Pancreas (tissue), 10 donors: ENCODE measurements at regions of chr3 and their contacts with region 1.

Region 1: DNA sequence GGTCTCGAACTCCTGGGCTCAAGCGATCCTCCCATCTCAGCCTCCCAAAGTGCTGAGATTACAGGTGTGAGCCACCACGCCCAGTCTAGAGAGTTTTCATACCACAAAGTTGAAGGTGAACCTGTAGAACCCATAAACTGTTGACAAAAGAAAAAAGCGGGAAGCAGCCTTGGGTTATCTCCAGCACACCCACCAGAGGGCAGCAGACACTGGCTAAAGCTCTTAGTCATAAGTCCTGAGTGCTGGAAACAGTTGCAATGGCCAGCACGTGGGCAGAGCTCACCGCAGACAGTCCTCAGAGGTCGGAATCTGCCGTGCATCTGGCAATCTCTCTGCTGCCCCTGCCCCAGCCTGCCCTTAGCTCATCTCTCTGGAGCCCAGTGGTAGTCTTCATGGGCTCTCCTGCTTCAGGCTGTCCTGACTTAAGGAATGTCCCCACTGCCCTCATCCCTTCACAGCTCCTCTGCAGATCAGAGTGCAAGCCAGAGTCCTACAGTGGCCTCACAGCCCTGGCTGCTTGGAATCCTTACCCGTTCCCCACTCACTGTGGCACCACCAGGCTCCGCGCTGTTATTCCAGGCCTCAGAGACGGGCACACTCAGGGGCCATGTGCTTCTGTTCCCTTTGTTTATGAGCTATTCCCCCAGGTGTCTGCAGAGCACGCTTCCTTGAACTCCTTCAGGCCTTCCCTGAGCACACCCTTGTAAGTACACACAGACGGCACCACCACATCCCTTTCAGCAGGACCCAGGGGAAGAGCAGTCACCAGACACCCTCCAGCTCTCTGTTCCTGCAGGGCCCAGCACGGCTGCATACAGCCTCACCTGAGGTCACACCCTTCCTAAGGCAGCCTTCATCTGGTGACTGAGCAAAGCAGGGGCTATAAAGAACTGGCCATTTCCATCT is 8.8 kb upstream of the ELP6 start:
- DNase-seq: peak; percentile 72 to 88 (median 81)
- ATAC-seq: peak; percentile 95 to 100 (median 100)
- H3K4me3 ChIP-seq: no peak overlapping the region
- H3K27ac ChIP-seq: no peak overlapping the region
- H3K4me1 ChIP-seq: no peaks in the 10 kb centered on the region
- H3K27me3 ChIP-seq: no peaks in the 10 kb centered on the region
- CTCF ChIP-seq: peak; percentile 65 to 81 (median 74)

Region 2: DNA sequence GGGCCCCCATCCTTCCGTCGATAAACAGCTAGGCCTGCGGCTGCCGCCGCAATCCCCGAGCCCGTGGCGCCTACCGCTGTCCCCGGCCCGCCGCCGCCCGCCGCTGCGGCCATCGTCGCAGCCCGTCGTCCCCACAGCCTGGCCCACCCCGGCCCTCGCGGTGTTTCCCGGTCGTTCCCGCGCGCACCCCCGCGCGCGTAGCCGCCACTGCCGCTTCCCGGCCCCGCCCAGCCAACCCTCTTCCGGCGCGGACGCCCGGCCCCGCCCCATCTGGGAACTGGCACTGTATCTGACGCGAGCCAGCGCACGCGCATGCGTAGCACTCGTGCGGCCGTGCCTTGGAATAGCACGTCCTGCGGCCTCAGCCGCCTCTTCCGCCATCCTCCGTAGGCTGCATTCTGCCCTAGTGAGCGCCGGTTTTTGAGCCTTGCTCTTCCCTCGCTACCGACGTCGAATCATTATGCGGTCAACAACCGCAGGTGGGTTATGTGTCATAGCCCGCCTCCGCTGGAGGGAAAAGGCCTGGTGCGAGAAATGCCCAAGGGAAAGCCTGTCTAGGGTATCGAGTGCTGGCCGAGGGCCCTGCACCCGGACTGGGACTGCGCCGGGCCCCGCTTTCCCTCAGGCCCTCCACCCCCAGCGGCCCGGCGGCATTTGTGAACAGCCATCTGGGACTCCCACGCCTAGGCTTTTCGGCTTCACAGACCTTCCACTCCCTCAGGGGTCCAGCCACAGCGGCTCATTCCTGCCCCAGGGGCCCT is 259.5 kb after region 1 on chr3 and contains the start of gene SMARCC1:
- intact Hi-C with region 1: loop called in 1 of 3 experiments (anchors 5 kb)
- DNase-seq: peak; percentile 96 to 100 (median 98)
- ATAC-seq: peak; percentile 95 to 98 (median 95)
- H3K4me3 ChIP-seq: peak within 1 kb of the TSS; percentile 76 to 97 (median 84)
- H3K27ac ChIP-seq: peak within 1 kb of the TSS; percentile 77 to 99 (median 92)
- H3K4me1 ChIP-seq: peaks cover 11 to 20% (median 14%) of the 10 kb centered on the region in 3 donors
- H3K27me3 ChIP-seq: no peaks in the 10 kb centered on the region
- CTCF ChIP-seq: no peak
- total RNA-seq, gene SMARCC1: 41.8 to 58.7 (median 45.8) TPM

Region 3: DNA sequence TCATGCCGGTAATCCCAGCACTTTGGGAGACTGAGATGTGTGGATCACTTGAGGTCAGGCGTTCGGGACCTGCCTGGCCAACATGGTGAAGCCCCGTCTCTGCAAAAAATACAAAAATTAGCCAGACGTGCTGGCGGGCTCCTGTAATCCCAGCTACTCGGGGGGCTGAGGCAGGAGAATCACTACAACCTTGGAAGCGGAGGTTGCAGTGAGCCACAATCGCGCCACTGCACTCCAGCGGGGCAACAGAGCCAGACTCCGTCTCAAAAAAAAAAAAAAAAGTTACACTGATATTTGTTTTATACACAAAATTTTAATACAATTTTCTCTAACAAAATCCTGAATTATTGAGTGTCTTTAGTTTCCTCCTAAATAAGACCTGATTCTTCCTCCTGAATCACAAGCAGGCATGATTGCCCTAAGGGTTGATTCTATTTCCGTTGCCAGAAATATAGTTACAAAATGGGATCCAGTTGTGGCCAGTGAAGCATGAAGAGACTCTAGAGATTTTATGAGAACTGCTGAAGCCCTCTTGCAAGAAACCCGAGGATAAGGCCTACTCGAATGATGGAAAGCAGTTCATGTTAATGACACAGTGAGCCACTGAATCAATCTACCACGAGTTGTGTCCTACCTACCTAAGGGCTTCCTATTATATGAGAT is 269.0 kb after region 1 on chr3:
- intact Hi-C with region 1: loop called in 2 of 3 experiments (anchors 2 to 5 kb)
- DNase-seq: no peak
- ATAC-seq: no peak
- H3K4me3 ChIP-seq: no peak overlapping the region
- H3K27ac ChIP-seq: no peak overlapping the region
- H3K4me1 ChIP-seq: no peaks in the 10 kb centered on the region
- H3K27me3 ChIP-seq: no peaks in the 10 kb centered on the region
- CTCF ChIP-seq: no peak